CD8-positive, alpha-beta T cell (primary cell): ENCODE measurements at regions of chr10 and their contacts with region 1.

Region 1: DNA sequence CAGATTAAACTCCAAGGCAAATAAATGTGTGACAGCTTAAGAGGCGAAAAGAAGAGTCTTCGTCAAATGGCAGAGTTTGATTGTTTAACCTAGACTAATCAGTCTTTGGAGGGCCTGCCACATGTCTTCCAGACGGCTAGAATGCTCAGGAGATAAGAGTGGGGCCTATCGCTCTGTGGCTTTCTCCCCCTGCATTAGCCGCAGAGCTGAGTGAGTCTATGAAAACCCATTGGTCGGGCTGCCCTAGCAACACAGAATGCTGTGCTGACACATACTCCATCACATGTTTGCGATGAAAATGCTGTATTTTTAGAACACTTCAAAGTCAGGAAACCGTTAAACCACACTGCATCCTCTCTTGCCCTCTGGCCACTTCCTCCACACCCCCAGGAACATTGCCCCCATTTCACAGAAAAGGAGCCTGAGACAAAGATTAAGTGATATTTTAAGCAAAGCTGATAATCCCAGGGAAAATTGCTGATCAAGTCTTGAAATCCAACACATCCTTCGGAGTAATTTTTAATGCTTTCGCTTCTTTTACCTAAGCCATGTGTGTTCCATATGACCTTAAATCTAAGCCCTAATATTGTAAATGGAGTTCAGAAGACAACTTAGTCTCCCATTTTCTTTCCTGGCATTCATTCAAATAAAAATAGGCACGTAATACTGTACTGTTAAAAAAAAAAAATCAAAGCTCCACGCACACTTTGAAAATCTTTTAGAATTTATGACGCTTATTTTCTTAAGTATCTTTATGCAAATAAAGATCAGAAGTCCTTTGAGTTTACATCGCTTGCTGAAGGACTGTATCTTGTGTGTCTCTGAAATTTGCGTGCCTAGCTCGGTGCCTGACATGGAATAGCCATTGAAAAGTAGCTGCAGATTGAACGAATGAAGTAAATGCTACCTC is 161.2 kb downstream of the CELF2 start:
- DNase-seq: peak; percentile 66 to 96 (median 85)
- ATAC-seq: peak; percentile 70
- H3K4me3 ChIP-seq: peak overlapping the region; percentile 25 to 40
- H3K4me3 Mint-ChIP-seq: no peak overlapping the region
- H3K27ac ChIP-seq: peak overlapping the region; percentile 48 to 79
- H3K27ac Mint-ChIP-seq: no peak overlapping the region
- H3K4me1 ChIP-seq: peaks cover 100% of the 10 kb centered on the region
- H3K4me1 Mint-ChIP-seq: peaks cover under 1% of the 10 kb centered on the region
- H3K27me3 ChIP-seq: no peaks in the 10 kb centered on the region
- H3K27me3 Mint-ChIP-seq: no peaks in the 10 kb centered on the region
- CTCF ChIP-seq: no peak

Region 2: GRCh38 chr10:11145495-11145855 is 33.4 kb before region 1 on chr10:
- CTCF ChIA-PET with region 1: interaction called, 202 read pairs
- POLR2A ChIA-PET with region 1: interaction called, 40 read pairs
- intact Hi-C with region 1: loop called (anchors 1 kb)
- DNase-seq: peak in 8 of 9 experiments; percentile 61 to 90 (median 78)
- ATAC-seq: peak; percentile 62
- H3K4me3 ChIP-seq: peak overlapping the region; percentile 18 to 30
- H3K4me3 Mint-ChIP-seq: peak overlapping the region; percentile 66
- H3K27ac ChIP-seq: peak overlapping the region; percentile 53 to 88
- H3K27ac Mint-ChIP-seq: peak overlapping the region; percentile 95
- H3K4me1 ChIP-seq: peaks cover 96% of the 10 kb centered on the region
- H3K4me1 Mint-ChIP-seq: peaks cover 97% of the 10 kb centered on the region
- H3K27me3 ChIP-seq: no peaks in the 10 kb centered on the region
- H3K27me3 Mint-ChIP-seq: no peaks in the 10 kb centered on the region
- CTCF ChIP-seq: no peak

Region 3: DNA sequence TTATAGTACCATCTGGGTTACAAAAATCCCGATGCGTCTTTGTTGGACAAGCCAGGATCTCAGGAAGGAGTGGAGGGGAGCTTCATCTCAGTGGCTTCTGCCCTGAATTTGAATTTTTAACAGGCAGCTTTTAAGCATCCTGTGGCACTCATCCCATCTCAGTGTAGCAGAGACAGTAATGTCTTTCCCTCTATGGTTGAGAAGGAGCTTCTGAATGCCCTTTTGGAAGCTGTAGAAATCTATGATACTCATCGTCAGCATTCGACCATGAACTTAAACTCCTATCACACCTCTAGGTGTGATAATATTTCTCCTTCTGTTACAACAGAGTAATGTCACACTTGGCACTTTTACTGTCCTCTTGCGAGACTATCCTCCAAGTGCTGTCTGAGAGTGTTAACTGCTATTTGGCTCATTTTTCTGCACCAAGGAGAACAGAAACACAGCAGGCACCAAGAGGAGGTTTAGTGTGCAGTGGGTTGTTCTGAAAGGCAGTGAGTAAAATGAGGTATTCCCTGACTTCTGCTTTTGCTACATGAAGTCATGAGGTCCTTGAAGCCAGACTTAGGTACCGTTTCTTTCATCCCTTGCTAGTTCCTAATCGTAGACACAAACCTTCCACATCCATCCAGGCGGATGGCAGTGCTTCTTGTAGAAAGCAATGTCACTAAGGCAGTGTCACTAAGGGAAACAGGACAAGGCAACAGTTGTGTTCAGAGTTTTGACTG is 16.2 kb after region 1 on chr10:
- CTCF ChIA-PET with region 1: interaction called, 4 read pairs
- POLR2A ChIA-PET with region 1: interaction called, 5 read pairs
- intact Hi-C with region 1: loop called in 1 of 2 experiments (anchors 1 kb)
- DNase-seq: peak in 1 of 9 experiments; percentile 51
- ATAC-seq: peak; percentile 23
- H3K4me3 ChIP-seq: no peak overlapping the region
- H3K4me3 Mint-ChIP-seq: peak overlapping the region; percentile 27
- H3K27ac ChIP-seq: peak overlapping the region in 1 of 2 experiments; percentile 28
- H3K27ac Mint-ChIP-seq: peak overlapping the region; percentile 83
- H3K4me1 ChIP-seq: peaks cover 93% of the 10 kb centered on the region
- H3K4me1 Mint-ChIP-seq: peaks cover 96% of the 10 kb centered on the region
- H3K27me3 ChIP-seq: no peaks in the 10 kb centered on the region
- H3K27me3 Mint-ChIP-seq: no peaks in the 10 kb centered on the region
- CTCF ChIP-seq: no peak

Region 4: GRCh38 chr10:11209830-11210181 is 30.9 kb after region 1 on chr10:
- CTCF ChIA-PET with region 1: interaction called, 4 read pairs
- POLR2A ChIA-PET with region 1: interaction called, 3 read pairs
- intact Hi-C with region 1: loop called in 1 of 2 experiments (anchors 5 kb)
- DNase-seq: peak in 3 of 9 experiments; percentile 30 to 63 (median 32)
- ATAC-seq: no peak
- H3K4me3 ChIP-seq: peak overlapping the region in 1 of 2 experiments; percentile 18
- H3K4me3 Mint-ChIP-seq: peak overlapping the region; percentile 77
- H3K27ac ChIP-seq: peak overlapping the region; percentile 7 to 64
- H3K27ac Mint-ChIP-seq: peak overlapping the region; percentile 93
- H3K4me1 ChIP-seq: peaks cover 99% of the 10 kb centered on the region
- H3K4me1 Mint-ChIP-seq: peaks cover 96% of the 10 kb centered on the region
- H3K27me3 ChIP-seq: no peaks in the 10 kb centered on the region
- H3K27me3 Mint-ChIP-seq: no peaks in the 10 kb centered on the region
- CTCF ChIP-seq: no peak

Region 5: DNA sequence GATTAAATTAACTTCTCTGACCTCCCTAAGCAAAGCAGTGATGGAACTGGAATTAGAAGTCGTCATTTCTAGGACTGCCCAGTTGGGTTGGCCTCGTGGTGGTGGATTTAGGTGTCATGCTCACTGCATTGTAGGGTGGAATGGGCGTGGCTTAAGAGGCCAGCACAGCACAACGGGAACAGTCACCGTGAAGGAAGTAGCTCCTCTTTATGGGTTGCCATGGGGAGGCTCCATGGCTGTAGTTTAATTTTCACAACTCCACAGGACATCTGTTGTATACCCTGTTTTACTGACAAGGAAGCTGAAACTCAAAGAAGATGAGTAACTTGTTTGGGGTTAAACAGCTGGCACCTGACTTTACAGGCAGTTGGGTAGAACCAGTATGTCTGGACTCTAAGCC is 47.1 kb after region 1 on chr10:
- CTCF ChIA-PET with region 1: interaction called, 3 read pairs
- POLR2A ChIA-PET with region 1: interaction called, 18 read pairs
- intact Hi-C with region 1: loop called (anchors 2 to 5 kb)
- DNase-seq: peak in 7 of 9 experiments; percentile 37 to 88 (median 61)
- ATAC-seq: peak; percentile 69
- H3K4me3 ChIP-seq: peak overlapping the region in 1 of 2 experiments; percentile 13
- H3K4me3 Mint-ChIP-seq: peak overlapping the region; percentile 69
- H3K27ac ChIP-seq: peak overlapping the region; percentile 41 to 78
- H3K27ac Mint-ChIP-seq: peak overlapping the region; percentile 98
- H3K4me1 ChIP-seq: peaks cover 75% of the 10 kb centered on the region
- H3K4me1 Mint-ChIP-seq: peaks cover 93% of the 10 kb centered on the region
- H3K27me3 ChIP-seq: no peaks in the 10 kb centered on the region
- H3K27me3 Mint-ChIP-seq: no peaks in the 10 kb centered on the region
- CTCF ChIP-seq: no peak